Endothelial cell of umbilical vein (primary cell): ENCODE measurements at regions of chr1 and their contacts with region 1.

Region 1: DNA sequence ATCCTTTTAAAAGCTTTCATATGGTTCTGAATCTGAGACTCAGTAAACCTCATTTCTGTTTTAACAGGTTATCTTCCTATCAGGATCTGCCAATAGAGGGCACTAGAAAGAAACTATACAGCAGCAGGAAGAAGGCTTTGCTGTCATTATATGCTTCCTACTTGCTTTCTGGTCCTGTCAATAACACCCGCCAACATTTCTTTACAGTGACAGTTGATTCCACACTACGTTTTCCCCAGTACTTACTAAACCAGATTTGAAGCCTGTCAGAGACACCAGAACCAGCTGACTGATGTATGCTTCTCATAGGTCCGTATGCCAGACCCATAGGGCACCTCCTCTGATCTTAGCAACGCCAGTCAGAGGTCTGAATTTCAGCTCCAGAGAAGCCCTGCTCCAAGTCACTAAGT is 341.0 kb upstream of the NEGR1 start:
- DNase-seq: peak; percentile 70
- H3K4me3 ChIP-seq: no peak overlapping the region
- H3K27ac ChIP-seq: no peak overlapping the region
- H3K4me1 ChIP-seq: peaks cover 10% of the 10 kb centered on the region
- H3K27me3 ChIP-seq: no peaks in the 10 kb centered on the region
- CTCF ChIP-seq: peak; percentile 25 to 56
- POLR2A ChIP-seq: no peak

Region 2: DNA sequence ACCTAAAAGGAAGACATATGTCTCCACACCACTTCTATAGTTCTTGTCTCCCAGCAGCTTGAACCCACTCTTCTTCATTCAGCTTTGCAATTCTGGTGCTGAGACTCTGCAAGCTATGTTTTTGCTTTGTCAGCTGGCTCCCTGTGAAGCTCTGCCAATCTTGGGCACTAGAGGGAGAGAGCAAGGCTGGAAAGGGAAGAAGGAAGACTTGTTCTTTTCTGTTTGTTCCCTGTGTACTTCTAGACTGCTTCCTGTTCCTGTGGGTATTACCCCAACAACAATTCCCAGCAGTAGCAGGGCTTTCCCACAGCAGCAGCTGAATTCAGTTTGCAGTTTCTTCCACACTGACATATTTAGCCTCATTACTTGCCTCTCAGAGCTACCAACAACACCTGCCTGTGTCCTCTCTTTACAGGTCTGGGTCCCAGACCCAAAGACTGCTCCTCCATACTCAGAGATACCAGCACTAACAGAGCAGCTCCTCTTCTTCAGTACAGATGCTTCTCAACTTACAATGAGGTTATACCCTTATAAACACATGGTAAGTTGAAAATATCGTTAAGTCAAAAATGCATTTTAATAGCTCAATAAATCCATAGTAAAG is 65.8 kb before region 1 on chr1:
- CTCF ChIA-PET with region 1: interaction called, 16 read pairs
- POLR2A ChIA-PET with region 1: no interaction called
- dilution Hi-C with region 1: no loop called
- intact Hi-C with region 1: no loop called
- DNase-seq: peak; percentile 55
- H3K4me3 ChIP-seq: no peak overlapping the region
- H3K27ac ChIP-seq: no peak overlapping the region
- H3K4me1 ChIP-seq: no peaks in the 10 kb centered on the region
- H3K27me3 ChIP-seq: no peaks in the 10 kb centered on the region
- CTCF ChIP-seq: peak; percentile 22 to 47
- POLR2A ChIP-seq: no peak

Region 3: DNA sequence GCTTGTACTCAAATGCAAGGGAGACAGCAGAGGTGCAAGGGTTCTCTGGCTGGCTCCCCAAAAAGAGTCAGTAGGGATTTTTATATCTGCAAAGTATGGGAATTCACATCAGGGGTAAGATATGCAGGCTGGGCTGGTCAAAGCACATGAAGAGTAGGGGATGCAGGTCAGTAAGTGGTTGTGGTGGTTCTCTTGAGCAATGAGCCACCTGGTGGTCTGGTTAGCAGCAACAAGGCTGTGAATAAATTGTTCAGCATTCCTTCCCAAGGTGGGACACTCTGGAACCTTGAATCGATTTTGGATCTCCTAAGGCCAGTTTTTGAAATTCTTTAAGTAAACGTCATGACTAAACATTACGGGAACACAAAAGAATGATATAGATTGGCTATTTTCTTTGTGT is 222.0 kb after region 1 on chr1:
- CTCF ChIA-PET with region 1: interaction called, 6 read pairs
- POLR2A ChIA-PET with region 1: no interaction called
- dilution Hi-C with region 1: no loop called
- intact Hi-C with region 1: loop called (anchors 5 kb)
- DNase-seq: peak; percentile 31
- H3K4me3 ChIP-seq: no peak overlapping the region
- H3K27ac ChIP-seq: no peak overlapping the region
- H3K4me1 ChIP-seq: no peaks in the 10 kb centered on the region
- H3K27me3 ChIP-seq: no peaks in the 10 kb centered on the region
- CTCF ChIP-seq: peak; percentile 21 to 39
- POLR2A ChIP-seq: no peak

Region 4: GRCh38 chr1:73674945-73675561 is 1051.7 kb after region 1 on chr1:
- CTCF ChIA-PET with region 1: interaction called, 6 read pairs
- POLR2A ChIA-PET with region 1: no interaction called
- dilution Hi-C with region 1: no loop called
- intact Hi-C with region 1: loop called (anchors 5 kb)
- DNase-seq: peak; percentile 28
- H3K4me3 ChIP-seq: no peak overlapping the region
- H3K27ac ChIP-seq: no peak overlapping the region
- H3K4me1 ChIP-seq: no peaks in the 10 kb centered on the region
- H3K27me3 ChIP-seq: no peaks in the 10 kb centered on the region
- CTCF ChIP-seq: peak; percentile 22 to 39
- POLR2A ChIP-seq: no peak